ENCODE measurements at regions of chr14 and their contacts with region 1.

Region 1: DNA sequence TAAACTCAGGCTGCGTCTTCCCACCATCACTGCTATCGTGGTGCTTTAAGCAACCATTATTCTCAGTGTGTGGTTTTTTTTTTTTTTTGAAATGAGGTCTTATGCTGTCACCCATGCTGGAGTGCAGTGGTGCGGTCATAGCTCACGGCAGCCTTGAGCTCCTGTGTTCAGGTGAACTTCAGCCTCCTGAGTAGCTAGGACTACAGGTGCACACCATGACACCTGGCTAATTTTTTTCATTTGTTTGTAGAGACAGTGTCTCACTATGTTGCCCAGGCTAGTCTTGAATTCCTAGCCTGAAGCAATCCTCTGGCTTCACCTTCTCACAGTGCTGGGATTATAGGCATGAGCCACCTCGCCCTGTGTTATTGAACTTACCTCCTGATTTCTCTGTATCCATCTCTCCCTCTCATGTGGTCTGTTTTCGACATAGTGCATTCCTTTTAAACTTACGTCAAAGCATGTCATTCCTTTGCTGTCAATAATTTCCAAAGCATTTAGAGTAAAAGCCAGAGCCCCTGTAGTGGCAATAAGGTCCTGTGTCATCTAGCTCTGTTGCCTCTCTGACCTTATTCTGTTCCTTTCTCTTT is 255.5 kb downstream of the SNAPC1 start:
- DNase-seq: no peak
- ATAC-seq: no peak
- H3K4me3 ChIP-seq: no peak overlapping the region
- H3K27ac ChIP-seq: no peak overlapping the region
- H3K4me1 ChIP-seq: no peaks in the 10 kb centered on the region
- H3K27me3 ChIP-seq: no peaks in the 10 kb centered on the region
- CTCF ChIP-seq: no peak

Region 2: DNA sequence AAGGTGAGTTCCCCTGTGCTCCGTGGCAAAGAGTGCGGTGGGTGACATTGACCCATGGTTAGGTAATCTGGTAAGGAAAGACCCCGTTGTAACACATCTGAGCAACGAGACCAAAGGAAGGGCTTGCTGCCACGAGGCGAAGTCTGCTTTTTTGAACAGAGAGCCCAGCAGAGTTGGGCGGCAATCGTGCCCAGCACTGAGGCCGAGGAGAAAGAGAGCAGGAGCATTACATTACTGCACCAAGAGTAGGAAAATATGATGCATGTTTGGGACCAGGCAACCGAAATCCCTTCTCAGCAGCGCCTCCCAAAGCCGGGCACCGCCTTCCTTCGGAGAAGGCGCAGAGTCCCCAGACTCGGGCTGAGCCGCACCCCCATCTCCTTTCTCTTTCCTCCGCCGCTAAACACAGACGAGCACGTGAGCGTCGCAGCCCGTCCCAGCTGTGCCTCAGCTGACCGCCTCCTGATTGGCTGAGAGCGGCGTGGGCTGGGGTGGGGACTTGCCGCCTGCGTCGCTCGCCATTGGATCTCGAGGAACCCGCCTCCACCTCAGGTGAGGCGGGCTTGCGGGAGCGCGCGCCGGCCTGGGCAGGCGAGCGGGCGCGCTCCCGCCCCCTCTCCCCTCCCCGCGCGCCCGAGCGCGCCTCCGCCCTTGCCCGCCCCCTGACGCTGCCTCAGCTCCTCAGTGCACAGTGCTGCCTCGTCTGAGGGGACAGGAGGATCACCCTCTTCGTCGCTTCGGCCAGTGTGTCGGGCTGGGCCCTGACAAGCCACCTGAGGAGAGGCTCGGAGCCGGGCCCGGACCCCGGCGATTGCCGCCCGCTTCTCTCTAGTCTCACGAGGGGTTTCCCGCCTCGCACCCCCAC is 322.7 kb before region 1 on chr14 and contains the start of gene HIF1A:
- CTCF ChIA-PET with region 1: no interaction called
- POLR2A ChIA-PET with region 1: no interaction called
- in situ Hi-C with region 1: no loop called
- intact Hi-C with region 1: no loop called
- DNase-seq: peak; percentile 79
- ATAC-seq: peak; percentile 99
- H3K4me3 ChIP-seq: peak within 1 kb of the TSS; percentile 73 to 94
- H3K27ac ChIP-seq: peak within 1 kb of the TSS; percentile 82
- H3K4me1 ChIP-seq: peaks cover 15% of the 10 kb centered on the region
- H3K27me3 ChIP-seq: no peaks in the 10 kb centered on the region
- CTCF ChIP-seq: no peak
- total RNA-seq, gene HIF1A: 83.4 TPM

Region 3: DNA sequence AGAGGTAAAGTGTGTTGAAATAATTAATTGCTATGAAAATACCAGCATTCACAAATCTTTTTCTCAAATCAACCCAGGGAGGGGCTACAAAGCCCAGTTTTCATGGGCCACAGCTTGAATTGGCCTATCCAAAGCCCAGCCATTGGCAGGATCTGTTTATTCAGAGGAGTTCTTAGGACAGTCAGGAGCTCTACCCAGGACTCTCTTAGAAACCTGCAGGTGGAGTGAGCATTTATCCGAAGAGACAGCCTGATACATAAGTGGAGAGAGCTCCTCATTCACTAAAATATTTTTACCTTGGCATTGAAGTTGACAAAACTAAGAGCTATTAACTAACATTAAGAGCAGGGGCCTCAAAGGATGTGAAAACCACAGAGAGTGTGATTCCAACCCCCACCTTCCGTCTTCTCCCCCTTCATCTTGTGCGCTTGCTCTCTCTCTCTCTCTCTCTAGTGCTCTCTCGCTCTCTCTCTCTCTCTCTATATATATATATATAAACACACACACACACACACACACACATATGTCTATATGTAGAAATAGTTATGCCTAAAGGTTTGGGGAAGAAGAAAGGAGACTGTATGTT is 60.0 kb after region 1 on chr14:
- CTCF ChIA-PET with region 1: no interaction called
- POLR2A ChIA-PET with region 1: interaction called, 12 read pairs
- in situ Hi-C with region 1: no loop called
- intact Hi-C with region 1: no loop called
- DNase-seq: no peak
- ATAC-seq: no peak
- H3K4me3 ChIP-seq: no peak overlapping the region
- H3K27ac ChIP-seq: no peak overlapping the region
- H3K4me1 ChIP-seq: no peaks in the 10 kb centered on the region
- H3K27me3 ChIP-seq: no peaks in the 10 kb centered on the region
- CTCF ChIP-seq: no peak

Measured in Panc1 (cell line).